Pancreas (tissue), 10 donors: ENCODE measurements at regions of chr17 and their contacts with region 1.

Region 1: DNA sequence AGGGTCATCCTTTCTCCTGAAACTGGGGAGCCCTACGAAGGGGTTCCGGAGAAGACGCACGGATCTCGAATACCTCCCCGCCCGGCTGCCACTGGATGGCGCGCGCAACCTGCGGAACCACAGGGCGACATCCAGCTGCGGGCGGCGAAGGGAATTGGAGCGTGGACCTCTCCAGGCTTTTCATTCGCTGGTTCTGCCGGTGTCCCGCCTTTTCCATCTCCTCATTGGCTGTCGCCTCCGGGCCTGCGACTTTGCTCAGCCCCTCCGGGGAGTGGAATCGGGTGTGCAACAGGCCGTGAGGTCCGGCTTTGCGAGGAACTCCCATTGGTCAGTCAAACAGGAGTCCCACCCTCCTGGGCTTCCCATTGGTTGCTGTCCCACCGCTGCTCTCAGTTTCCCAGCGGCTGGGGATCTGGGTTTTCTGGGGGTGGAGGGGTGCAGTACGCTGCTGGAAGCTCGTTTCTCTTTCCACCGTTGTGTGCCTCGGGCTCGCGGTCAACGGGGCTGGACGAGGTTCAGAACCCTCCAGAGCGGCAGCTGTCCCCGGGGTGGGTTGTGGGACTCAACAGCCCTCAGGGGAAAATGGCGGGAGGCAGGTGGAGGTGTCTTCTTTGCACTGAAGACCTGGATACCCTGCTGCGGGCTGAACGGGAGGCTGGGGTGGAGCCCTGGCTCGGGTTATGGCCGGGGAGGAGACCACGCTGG is 14.5 kb downstream of the OR1D5 start:
- DNase-seq: peak; percentile 92 to 99 (median 94)
- ATAC-seq: peak; percentile 98 to 99 (median 99)
- H3K4me3 ChIP-seq: peak overlapping the region; percentile 40 to 55 (median 50)
- H3K27ac ChIP-seq: peak overlapping the region; percentile 13 to 74 (median 36)
- H3K4me1 ChIP-seq: no peaks in the 10 kb centered on the region
- H3K27me3 ChIP-seq: no peaks in the 10 kb centered on the region
- CTCF ChIP-seq: peak in 3 of 4 donors; percentile 25 to 52 (median 43)

Region 2: DNA sequence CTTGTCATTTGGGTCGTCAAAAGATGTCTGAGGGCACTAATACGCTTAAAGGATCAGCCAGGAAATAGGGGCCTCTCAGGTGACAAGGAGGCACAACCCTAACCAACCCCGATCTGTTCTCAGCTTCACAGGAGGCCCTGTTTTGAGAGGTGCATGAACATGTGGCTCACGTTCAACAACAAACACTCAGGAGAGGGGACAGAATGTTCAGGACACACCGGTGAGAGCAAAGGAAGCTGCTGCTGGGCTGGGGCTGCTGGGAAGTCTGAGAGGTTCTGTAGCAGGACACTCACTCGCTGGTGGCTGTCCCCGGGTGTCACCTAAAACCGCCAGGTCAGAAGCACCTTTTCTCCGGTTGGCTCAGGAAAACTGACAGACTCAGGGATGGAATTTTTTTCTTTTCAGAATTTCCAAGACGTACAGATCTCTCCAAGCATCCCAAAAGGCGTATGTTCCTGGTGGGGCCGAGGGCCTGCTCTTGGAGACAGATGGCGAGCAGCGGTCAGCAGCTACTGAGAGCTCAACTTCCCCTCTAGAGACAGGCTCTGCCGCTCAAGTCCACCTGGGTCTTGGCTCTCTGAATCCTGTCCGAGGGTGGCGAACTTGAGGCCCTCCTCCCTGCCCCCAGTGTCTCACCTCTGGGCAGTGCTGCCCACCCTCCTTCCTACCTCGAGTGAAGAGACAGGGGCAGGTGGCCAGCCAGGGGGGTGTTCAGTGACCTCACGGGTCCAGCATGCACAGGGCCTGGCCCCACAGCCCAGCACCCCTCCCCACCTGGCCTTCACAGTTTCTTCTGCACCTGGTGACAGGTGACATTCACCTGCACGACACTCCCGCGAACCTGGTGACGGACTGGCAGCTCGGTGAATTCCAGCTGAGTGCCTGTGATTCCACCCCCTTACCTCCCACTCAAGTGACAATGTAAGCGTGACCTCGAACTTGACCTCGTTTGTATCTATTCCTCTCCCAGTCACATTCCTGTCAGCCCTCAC is 360.3 kb before region 1 on chr17:
- intact Hi-C with region 1: no loop called
- DNase-seq: peak; percentile 16 to 72 (median 35)
- ATAC-seq: peak; percentile 2 to 38 (median 8)
- H3K4me3 ChIP-seq: no peak overlapping the region
- H3K27ac ChIP-seq: no peak overlapping the region
- H3K4me1 ChIP-seq: peaks cover 4 to 6% (median 4%) of the 10 kb centered on the region in 3 donors
- H3K27me3 ChIP-seq: no peaks in the 10 kb centered on the region
- CTCF ChIP-seq: no peak

Region 3: DNA sequence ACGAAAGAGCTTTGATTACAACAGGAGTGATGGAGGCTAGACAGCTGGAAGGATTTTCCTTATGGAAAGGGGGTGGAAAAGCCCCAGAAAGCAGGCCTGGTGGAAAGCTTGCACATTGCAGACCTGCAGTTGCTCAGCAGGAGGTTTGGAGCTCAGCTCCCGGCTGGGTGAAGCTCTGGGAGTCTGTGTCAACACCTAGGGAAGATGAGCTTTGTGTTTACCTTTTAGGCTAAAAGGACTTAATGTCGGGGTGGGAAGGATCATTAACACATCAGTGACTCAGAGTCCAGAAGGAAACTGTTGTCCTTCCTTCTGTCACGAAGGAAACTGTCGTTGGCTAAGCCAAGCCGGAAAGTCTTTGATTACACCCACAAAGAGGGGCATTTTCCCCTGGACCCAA is 204.5 kb before region 1 on chr17:
- intact Hi-C with region 1: no loop called
- DNase-seq: no peak
- ATAC-seq: peak in 2 of 4 donors; percentile 58 to 60
- H3K4me3 ChIP-seq: no peak overlapping the region
- H3K27ac ChIP-seq: no peak overlapping the region
- H3K4me1 ChIP-seq: no peaks in the 10 kb centered on the region
- H3K27me3 ChIP-seq: no peaks in the 10 kb centered on the region
- CTCF ChIP-seq: no peak

Region 4: GRCh38 chr17:3647769-3648555 is 599.0 kb after region 1 on chr17:
- intact Hi-C with region 1: loop called in 1 of 3 experiments (anchors 10 kb)
- DNase-seq: peak in 3 of 6 donors; percentile 61 to 86 (median 77)
- ATAC-seq: peak; percentile 55 to 92 (median 86)
- H3K4me3 ChIP-seq: no peak overlapping the region
- H3K27ac ChIP-seq: no peak overlapping the region
- H3K4me1 ChIP-seq: no peaks in the 10 kb centered on the region
- H3K27me3 ChIP-seq: no peaks in the 10 kb centered on the region
- CTCF ChIP-seq: peak in 2 of 4 donors; percentile 14 to 25